ENCODE measurements at regions of chr11 and their contacts with region 1.

Region 1: DNA sequence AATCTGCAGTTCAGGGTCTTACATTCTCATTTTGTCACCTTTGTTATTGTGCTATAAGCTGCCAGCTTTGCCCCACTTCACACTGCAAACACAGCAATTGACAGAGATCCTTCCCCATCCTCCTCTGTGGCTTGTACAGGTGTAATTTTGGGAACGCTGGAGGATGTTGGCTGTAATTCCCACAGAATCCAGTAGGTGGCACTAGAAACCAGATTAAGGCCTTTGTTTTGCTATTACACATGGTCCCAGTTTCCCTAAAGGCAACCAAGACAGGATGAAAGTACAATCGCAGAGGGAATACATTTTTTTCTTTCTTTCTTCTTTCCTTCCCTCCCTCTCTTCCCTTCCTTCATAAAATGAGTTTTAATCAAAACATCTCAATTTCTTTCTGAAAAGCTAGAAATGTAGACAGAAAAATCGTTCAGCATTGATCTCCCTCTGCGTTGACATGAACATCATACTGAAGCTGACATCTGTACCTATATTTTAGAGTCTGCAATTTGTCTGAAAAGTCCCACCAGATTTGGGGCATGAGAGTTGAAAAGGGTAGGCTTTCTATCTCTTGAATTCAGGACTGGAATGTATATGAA is 21.3 kb upstream of the NELL1 start:
- DNase-seq: peak; percentile 50
- ATAC-seq: peak; percentile 76
- H3K4me3 ChIP-seq: no peak overlapping the region
- H3K27ac ChIP-seq: no peak overlapping the region
- H3K4me1 ChIP-seq: no peaks in the 10 kb centered on the region
- H3K27me3 ChIP-seq: peaks cover 0 to 20% of the 10 kb centered on the region in 2 experiments; a peak in 2 of 5 replicates
- CTCF ChIP-seq: peak; percentile 85
- EP300 ChIP-seq: no peak
- POLR2A ChIP-seq: no peak
- RAD21 ChIP-seq: peak; percentile 65

Region 2: GRCh38 chr11:20671856-20672546 is 23.9 kb after region 1 on chr11:
- CTCF ChIA-PET with region 1: interaction called, 7 read pairs
- POLR2A ChIA-PET with region 1: no interaction called
- in situ Hi-C with region 1: no loop called
- intact Hi-C with region 1: loop called (anchors 1 kb)
- DNase-seq: peak; percentile 7
- ATAC-seq: peak; percentile 84
- H3K4me3 ChIP-seq: no peak overlapping the region
- H3K27ac ChIP-seq: no peak overlapping the region
- H3K4me1 ChIP-seq: no peaks in the 10 kb centered on the region
- H3K27me3 ChIP-seq: peaks cover 3 to 52% of the 10 kb centered on the region in 2 experiments
- CTCF ChIP-seq: peak; percentile 17; the same call in 1 of the 2 replicates
- EP300 ChIP-seq: no peak
- POLR2A ChIP-seq: no peak
- RAD21 ChIP-seq: no peak

Region 3: DNA sequence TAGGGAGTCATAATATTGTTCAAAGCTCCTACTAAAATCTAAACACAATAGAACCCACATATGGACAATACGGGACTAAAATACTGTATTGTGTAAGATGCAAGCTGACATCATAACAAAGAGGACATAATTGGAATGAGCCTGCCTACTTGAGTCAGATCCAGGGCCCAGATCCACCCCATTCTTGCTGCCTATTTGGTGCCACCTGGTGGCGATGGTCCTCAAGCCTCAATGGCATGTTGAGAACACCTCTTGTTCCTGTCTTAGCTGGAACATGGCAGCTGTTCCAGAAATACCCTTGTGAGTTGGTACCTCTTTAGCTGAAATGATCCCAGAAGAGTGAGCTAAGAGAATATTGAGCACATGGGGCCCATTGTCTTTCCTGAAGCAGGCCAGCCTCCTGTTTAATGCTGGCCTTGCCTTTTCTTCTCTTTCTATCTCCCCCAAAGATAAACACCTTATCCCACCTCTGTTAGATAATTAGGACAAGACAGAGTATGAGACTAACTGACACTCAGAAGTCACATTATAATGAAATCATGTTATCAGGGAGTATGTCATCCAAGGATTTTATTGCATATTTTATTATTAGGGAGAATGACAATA is 863.9 kb after region 1 on chr11:
- CTCF ChIA-PET with region 1: interaction called, 16 read pairs
- POLR2A ChIA-PET with region 1: no interaction called
- in situ Hi-C with region 1: loop called (anchors 5 kb)
- intact Hi-C with region 1: no loop called
- DNase-seq: peak; percentile 48
- ATAC-seq: peak; percentile 88
- H3K4me3 ChIP-seq: no peak overlapping the region
- H3K27ac ChIP-seq: no peak overlapping the region
- H3K4me1 ChIP-seq: no peaks in the 10 kb centered on the region
- H3K27me3 ChIP-seq: no peaks in the 10 kb centered on the region
- CTCF ChIP-seq: peak; percentile 75
- EP300 ChIP-seq: no peak
- POLR2A ChIP-seq: no peak
- RAD21 ChIP-seq: no peak

Region 4: DNA sequence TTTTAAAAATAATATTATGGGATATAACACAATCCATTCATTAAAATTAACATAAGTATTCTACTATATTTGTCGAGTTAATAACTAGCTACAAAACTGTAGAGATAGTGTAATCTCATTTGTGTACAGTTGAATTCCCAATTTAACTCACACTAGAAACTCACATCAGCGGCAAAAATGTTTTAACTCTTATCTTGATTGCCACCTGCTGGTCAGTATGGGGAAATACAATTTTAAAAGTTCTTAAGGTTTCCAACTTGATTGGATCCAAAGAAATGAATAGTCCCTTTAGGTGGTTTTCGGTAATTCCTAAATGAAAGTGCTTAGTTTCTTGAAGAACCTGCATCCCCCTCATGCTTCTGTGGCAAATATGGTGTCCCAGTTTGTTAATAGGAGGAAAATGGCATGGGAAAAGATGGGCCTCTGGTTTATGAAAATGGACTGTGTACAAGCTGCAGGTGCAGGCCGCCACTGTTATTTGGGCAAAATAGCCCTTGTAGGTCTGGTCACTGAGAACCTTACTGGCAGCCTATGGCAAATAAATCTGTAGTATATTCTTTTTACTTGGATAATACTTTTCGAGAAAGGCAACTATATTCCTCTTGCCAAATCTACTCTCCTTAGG is 1656.4 kb after region 1 on chr11:
- CTCF ChIA-PET with region 1: interaction called, 6 read pairs
- POLR2A ChIA-PET with region 1: no interaction called
- in situ Hi-C with region 1: loop called (anchors 25 kb)
- intact Hi-C with region 1: no loop called
- DNase-seq: peak; percentile 12
- ATAC-seq: 0 out of 3 replicates have a peak, but pooled peaks have one; percentile 33
- H3K4me3 ChIP-seq: no peak overlapping the region
- H3K27ac ChIP-seq: no peak overlapping the region
- H3K4me1 ChIP-seq: no peaks in the 10 kb centered on the region
- H3K27me3 ChIP-seq: no peaks in the 10 kb centered on the region
- CTCF ChIP-seq: peak; percentile 59
- EP300 ChIP-seq: no peak
- POLR2A ChIP-seq: no peak
- RAD21 ChIP-seq: no peak